Endothelial cell of umbilical vein (primary cell): ENCODE measurements at regions of chr18 and their contacts with region 1.

Region 1: DNA sequence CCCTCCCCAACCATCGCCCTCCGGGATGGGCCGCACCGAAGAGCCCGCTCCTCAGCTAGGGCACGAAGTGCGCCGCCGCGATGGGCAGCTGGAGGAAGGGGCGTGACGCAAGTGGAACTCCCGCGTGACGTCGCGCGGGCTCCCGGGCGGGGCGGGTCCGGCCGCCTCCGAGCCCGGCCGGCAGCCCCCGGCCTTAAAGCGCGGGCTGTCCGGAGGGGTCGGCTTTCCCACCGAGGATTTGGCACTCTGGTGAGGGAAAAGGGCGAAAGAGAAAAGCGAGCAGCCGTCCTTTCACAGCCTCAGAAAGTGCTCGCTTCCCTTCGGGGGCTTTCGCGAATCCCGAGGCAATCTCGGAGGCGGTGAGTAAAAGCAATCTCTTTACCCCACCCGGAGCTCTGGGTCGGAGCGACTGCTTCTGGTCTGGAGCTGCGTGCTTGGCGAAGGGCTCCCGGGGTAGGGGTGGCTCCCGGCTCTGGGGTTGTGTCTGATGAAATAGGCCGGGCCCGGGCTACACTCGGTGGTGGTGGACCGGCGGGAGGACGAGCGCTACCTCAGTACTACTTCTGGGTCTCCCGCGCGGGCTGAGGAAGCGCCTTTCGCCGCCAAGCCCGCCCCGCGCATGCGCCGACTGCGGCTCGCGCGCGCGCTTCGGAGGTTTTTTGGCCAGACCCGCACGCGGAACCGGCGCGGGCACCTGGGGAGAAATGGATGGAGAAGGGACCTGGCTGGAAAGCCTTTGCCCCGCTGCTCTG is at the start of gene RBBP8:
- DNase-seq: peak; percentile 84
- H3K4me3 ChIP-seq: peak within 1 kb of the TSS; percentile 41 to 84 (median 54)
- H3K27ac ChIP-seq: peak within 1 kb of the TSS; percentile 73
- H3K4me1 ChIP-seq: peaks cover 21% of the 10 kb centered on the region
- H3K27me3 ChIP-seq: no peaks in the 10 kb centered on the region
- CTCF ChIP-seq: no peak
- POLR2A ChIP-seq: peak; percentile 59
- total RNA-seq, gene RBBP8: 13.5 and 15.4 TPM in 2 replicates

Region 2: GRCh38 chr18:22494771-22495170 is 438.6 kb before region 1 on chr18:
- CTCF ChIA-PET with region 1: no interaction called
- POLR2A ChIA-PET with region 1: no interaction called
- dilution Hi-C with region 1: no loop called
- intact Hi-C with region 1: no loop called
- DNase-seq: peak; percentile 70
- H3K4me3 ChIP-seq: no peak overlapping the region
- H3K27ac ChIP-seq: peak overlapping the region; percentile 23
- H3K4me1 ChIP-seq: peaks cover 9% of the 10 kb centered on the region
- H3K27me3 ChIP-seq: no peaks in the 10 kb centered on the region
- CTCF ChIP-seq: no peak
- POLR2A ChIP-seq: no peak

Region 3: GRCh38 chr18:22800551-22800951 is 132.8 kb before region 1 on chr18:
- CTCF ChIA-PET with region 1: interaction called, 3 read pairs
- POLR2A ChIA-PET with region 1: no interaction called
- dilution Hi-C with region 1: no loop called
- intact Hi-C with region 1: loop called (anchors 5 kb)
- DNase-seq: no peak
- H3K4me3 ChIP-seq: no peak overlapping the region
- H3K27ac ChIP-seq: no peak overlapping the region
- H3K4me1 ChIP-seq: no peaks in the 10 kb centered on the region
- H3K27me3 ChIP-seq: peaks cover 33 to 48% of the 10 kb centered on the region in 2 experiments
- CTCF ChIP-seq: no peak
- POLR2A ChIP-seq: no peak

Region 4: GRCh38 chr18:22856870-22857269 is 76.5 kb before region 1 on chr18:
- CTCF ChIA-PET with region 1: no interaction called
- POLR2A ChIA-PET with region 1: no interaction called
- dilution Hi-C with region 1: no loop called
- intact Hi-C with region 1: no loop called
- DNase-seq: no peak
- H3K4me3 ChIP-seq: no peak overlapping the region
- H3K27ac ChIP-seq: no peak overlapping the region
- H3K4me1 ChIP-seq: no peaks in the 10 kb centered on the region
- H3K27me3 ChIP-seq: peaks cover 30 to 66% of the 10 kb centered on the region in 2 experiments
- CTCF ChIP-seq: no peak
- POLR2A ChIP-seq: no peak

Region 5: DNA sequence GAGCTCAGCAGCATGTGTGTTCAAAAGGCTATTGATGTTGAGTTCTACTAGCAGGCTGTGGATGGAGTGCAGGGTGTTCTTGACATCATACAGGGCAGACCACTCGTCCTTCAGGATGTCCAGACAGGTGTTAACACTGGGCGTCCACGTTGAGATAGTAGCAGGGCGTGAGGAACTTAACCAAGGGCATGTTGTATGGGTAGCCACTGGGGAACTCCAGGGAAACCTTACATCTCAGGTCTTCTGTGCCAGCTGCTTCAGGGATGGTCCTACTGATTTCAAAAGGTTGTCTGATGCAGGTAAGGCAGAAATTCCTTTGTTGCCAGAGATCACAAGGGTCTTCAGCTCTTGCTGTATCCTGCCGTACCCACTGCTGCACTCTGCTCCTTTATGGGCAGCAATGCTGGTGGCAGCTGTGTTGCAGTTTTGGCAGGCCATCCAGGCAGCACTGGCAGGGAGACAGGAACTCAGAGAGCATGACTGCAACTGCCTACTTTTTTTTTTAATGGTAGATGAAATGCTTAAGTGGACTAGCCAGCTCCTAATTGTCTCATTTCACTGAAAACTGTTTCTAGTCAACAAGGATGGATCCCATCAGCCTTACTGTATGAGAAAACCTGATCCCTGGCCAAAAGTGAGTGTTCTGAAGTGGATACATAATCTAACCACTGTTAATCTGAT is 32.7 kb before region 1 on chr18:
- CTCF ChIA-PET with region 1: no interaction called
- POLR2A ChIA-PET with region 1: no interaction called
- dilution Hi-C with region 1: no loop called
- intact Hi-C with region 1: no loop called
- DNase-seq: no peak
- H3K4me3 ChIP-seq: no peak overlapping the region
- H3K27ac ChIP-seq: no peak overlapping the region
- H3K4me1 ChIP-seq: no peaks in the 10 kb centered on the region
- H3K27me3 ChIP-seq: peaks cover 9 to 15% of the 10 kb centered on the region in 2 experiments
- CTCF ChIP-seq: no peak
- POLR2A ChIP-seq: no peak

Region 6: GRCh38 chr18:23458830-23459529 is 525.6 kb after region 1 on chr18:
- CTCF ChIA-PET with region 1: no interaction called
- POLR2A ChIA-PET with region 1: no interaction called
- dilution Hi-C with region 1: no loop called
- intact Hi-C with region 1: loop called (anchors 5 kb)
- DNase-seq: peak; percentile 7
- H3K4me3 ChIP-seq: no peak overlapping the region
- H3K27ac ChIP-seq: no peak overlapping the region
- H3K4me1 ChIP-seq: peaks cover 13% of the 10 kb centered on the region
- H3K27me3 ChIP-seq: no peaks in the 10 kb centered on the region
- CTCF ChIP-seq: no peak
- POLR2A ChIP-seq: no peak